ENCODE measurements at regions of chr18 and their contacts with region 1.

Region 1: GRCh38 chr18:48002933-48003365 is 72.5 kb upstream of the SMAD2 start:
- DNase-seq: peak; percentile 72
- ATAC-seq: peak; percentile 86 to 92

Region 2: GRCh38 chr18:47929681-47930198 is 73.2 kb before region 1 on chr18:
- intact Hi-C with region 1: loop called in 1 of 2 experiments (anchors 5 kb)
- DNase-seq: no peak
- ATAC-seq: peak in 1 of 2 donors; percentile 2